Activated CD4-positive, alpha-beta T cell treated with anti-CD3 and anti-CD28 coated beads, Interleukin-2, amount 10 ng/mL, durations not matched to agents 7 days and 5 days (primary cell): ENCODE measurements at regions of chr13 and their contacts with region 1.

Region 1: GRCh38 chr13:42991892-42992763 is at the start of gene EPSTI1:
- DNase-seq: peak; percentile 88
- H3K4me3 Mint-ChIP-seq: peak within 1 kb of the TSS; percentile 83
- H3K27ac Mint-ChIP-seq: peak within 1 kb of the TSS; percentile 100
- H3K4me1 Mint-ChIP-seq: peaks cover 63% of the 10 kb centered on the region
- H3K27me3 Mint-ChIP-seq: no peaks in the 10 kb centered on the region
- total RNA-seq, gene EPSTI1: 120 to 121 TPM

Region 2: GRCh38 chr13:42950181-42950580 is 41.9 kb before region 1 on chr13:
- CTCF ChIA-PET with region 1: interaction called, 3 read pairs
- POLR2A ChIA-PET with region 1: interaction called, 10 read pairs
- DNase-seq: no peak
- H3K4me3 Mint-ChIP-seq: no peak overlapping the region
- H3K27ac Mint-ChIP-seq: no peak overlapping the region
- H3K4me1 Mint-ChIP-seq: peaks cover 2% of the 10 kb centered on the region
- H3K27me3 Mint-ChIP-seq: no peaks in the 10 kb centered on the region

Region 3: GRCh38 chr13:42970824-42971690 is 21.1 kb before region 1 on chr13:
- CTCF ChIA-PET with region 1: interaction called, 39 read pairs
- POLR2A ChIA-PET with region 1: no interaction called
- DNase-seq: peak; percentile 63
- H3K4me3 Mint-ChIP-seq: no peak overlapping the region
- H3K27ac Mint-ChIP-seq: no peak overlapping the region
- H3K4me1 Mint-ChIP-seq: peaks cover 31% of the 10 kb centered on the region
- H3K27me3 Mint-ChIP-seq: no peaks in the 10 kb centered on the region